ENCODE measurements at regions of chr11 and their contacts with region 1.

Region 1: GRCh38 chr11:44627911-44628729 is 62.7 kb downstream of the CD82 start:
- DNase-seq: peak; percentile 76
- ATAC-seq: peak; percentile 71
- H3K4me3 ChIP-seq: no peak overlapping the region
- H3K27ac ChIP-seq: peak overlapping the region; percentile 55
- H3K4me1 ChIP-seq: peaks cover 32% of the 10 kb centered on the region
- H3K27me3 ChIP-seq: no peaks in the 10 kb centered on the region
- CTCF ChIP-seq: peak; percentile 18

Region 2: GRCh38 chr11:44334356-44335004 is 293.6 kb before region 1 on chr11:
- intact Hi-C with region 1: no loop called
- DNase-seq: peak; percentile 46
- ATAC-seq: no peak
- H3K4me3 ChIP-seq: no peak overlapping the region
- H3K27ac ChIP-seq: no peak overlapping the region
- H3K4me1 ChIP-seq: no peaks in the 10 kb centered on the region
- H3K27me3 ChIP-seq: peaks cover 60% of the 10 kb centered on the region
- CTCF ChIP-seq: no peak

Region 3: DNA sequence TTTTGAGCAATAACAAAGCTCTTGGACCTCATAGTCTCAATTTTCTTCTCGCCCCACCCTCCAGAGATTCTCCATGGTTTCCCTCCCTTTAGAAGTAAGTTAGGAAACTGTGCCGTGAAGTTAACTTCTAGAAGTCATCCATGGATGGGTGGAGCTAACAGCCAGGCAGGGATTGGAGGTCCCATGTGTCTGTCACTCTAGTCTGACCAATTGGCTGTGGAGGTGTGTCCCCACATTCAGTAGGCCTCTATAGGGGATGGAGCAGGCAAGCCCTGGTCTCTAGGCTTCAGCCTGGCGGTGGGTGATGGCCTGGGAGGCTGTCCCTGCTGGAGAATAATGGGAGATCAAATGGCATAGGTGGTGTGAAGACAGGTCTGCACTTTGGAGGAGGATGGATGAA is 271.8 kb after region 1 on chr11:
- intact Hi-C with region 1: loop called (anchors 5 kb)
- DNase-seq: no peak
- ATAC-seq: peak; percentile 31
- H3K4me3 ChIP-seq: no peak overlapping the region
- H3K27ac ChIP-seq: no peak overlapping the region
- H3K4me1 ChIP-seq: no peaks in the 10 kb centered on the region
- H3K27me3 ChIP-seq: no peaks in the 10 kb centered on the region
- CTCF ChIP-seq: no peak

Measured in upper lobe of right lung (tissue), 1 donor.